Heart left ventricle (tissue), 16 donors: ENCODE measurements at regions of chr3 and their contacts with region 1.

Region 1: DNA sequence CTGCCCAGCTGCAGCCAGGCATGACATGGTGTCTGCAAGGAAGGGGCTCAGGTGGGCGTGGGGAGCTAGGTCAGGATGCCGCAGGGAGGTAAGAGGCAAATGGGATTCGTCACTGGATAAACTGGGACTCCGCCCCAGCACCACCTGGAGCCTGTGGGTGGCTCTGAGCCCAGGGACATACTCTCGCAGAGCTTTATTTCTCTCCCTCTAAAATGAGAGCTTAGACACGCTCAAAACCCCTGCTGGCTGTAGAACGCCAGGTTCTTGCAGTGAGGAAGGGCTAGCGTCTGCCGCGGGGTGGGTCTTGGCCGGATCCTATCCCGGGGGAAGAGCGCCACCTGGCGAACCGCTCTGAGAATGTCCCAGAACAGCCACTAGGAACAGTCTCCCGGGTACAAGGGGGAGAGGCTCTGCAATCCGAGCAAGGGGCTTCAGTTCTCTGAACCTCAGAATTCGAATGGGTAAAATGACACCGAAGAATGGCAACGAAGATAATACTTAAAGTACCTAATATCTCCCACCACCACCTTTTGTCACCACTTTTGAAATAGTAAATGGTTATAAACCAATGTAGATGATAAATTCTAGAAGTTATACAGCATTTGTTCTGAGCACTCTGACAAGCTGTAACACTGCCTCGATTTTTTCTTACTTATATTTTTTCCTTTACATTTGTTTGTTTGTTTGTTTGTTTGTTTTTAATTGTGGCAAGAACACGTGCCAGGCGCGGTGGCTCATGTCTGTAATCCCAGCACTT is 53.2 kb upstream of the SRGAP3 start:
- DNase-seq: peak; percentile 73 to 89 (median 80)
- ATAC-seq: peak; percentile 87 to 96 (median 94)
- H3K4me3 ChIP-seq: peak overlapping the region in 8 of 12 donors; percentile 18 to 50 (median 32)
- H3K27ac ChIP-seq: no peak overlapping the region
- H3K4me1 ChIP-seq: peaks cover 0 to 11% (median 3%) of the 10 kb centered on the region in 12 donors
- H3K27me3 ChIP-seq: peaks cover 0 to 5% (median 0%) of the 10 kb centered on the region in 9 donors
- CTCF ChIP-seq: peak; percentile 77 to 96 (median 88)
- POLR2A ChIP-seq: no peak

Region 2: GRCh38 chr3:8945890-8946600 is 356.6 kb before region 1 on chr3:
- intact Hi-C with region 1: no loop called
- DNase-seq: no peak
- ATAC-seq: no peak
- H3K4me3 ChIP-seq: no peak overlapping the region
- H3K27ac ChIP-seq: no peak overlapping the region
- H3K4me1 ChIP-seq: no peaks in the 10 kb centered on the region
- H3K27me3 ChIP-seq: no peaks in the 10 kb centered on the region
- CTCF ChIP-seq: no peak
- POLR2A ChIP-seq: no peak

Region 3: GRCh38 chr3:8970971-8971589 is 331.5 kb before region 1 on chr3:
- intact Hi-C with region 1: loop called (anchors 1 to 2 kb)
- DNase-seq: peak in 3 of 5 donors; percentile 43 to 56 (median 54)
- ATAC-seq: peak; percentile 5 to 70 (median 64)
- H3K4me3 ChIP-seq: no peak overlapping the region
- H3K27ac ChIP-seq: no peak overlapping the region
- H3K4me1 ChIP-seq: peaks cover 0 to 3% (median 0%) of the 10 kb centered on the region in 12 donors
- H3K27me3 ChIP-seq: peaks cover 0 to 6% (median 0%) of the 10 kb centered on the region in 9 donors
- CTCF ChIP-seq: peak; percentile 94 to 100 (median 99)
- POLR2A ChIP-seq: no peak

Region 4: DNA sequence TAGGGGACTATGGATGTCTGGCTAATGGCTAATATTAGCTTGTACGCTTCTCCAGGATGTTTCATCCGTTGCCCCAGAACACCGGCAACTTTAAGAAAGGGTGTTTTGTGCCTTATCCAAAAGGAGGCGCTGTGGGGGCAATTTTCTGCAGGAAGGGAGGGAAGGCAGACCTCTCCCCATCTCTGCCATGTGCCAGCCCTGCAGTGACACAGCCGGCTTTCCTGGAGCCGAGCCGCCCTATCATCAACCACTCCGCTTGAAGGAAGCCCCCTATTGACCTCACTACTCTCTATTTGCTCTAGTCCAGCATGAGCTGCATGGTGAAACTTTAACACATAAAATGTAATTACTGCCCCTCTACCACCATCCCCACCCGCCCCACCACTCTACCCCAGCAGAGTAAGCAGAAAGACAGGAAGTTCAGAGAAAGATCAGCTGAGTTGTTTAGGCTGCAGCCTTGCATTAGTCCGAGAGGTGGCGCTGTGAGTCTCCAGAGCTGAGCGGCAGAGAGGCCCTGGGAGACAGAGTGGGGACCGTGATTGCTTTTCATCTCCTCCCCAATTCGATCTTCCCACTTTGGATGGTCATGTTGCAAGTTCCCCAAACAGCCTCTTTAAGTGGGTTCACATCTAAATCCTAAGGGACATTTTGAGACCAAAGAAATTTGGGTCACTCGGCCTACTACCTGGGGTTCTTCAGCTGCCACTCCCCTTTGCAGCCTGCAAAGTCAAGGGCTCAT is 314.8 kb before region 1 on chr3:
- intact Hi-C with region 1: loop called (anchors 1 to 5 kb)
- DNase-seq: peak in 4 of 5 donors; percentile 52 to 68 (median 57)
- ATAC-seq: peak; percentile 56 to 81 (median 66)
- H3K4me3 ChIP-seq: no peak overlapping the region
- H3K27ac ChIP-seq: no peak overlapping the region
- H3K4me1 ChIP-seq: peaks cover 0 to 18% (median 3%) of the 10 kb centered on the region in 12 donors
- H3K27me3 ChIP-seq: no peaks in the 10 kb centered on the region
- CTCF ChIP-seq: peak; percentile 63 to 85 (median 74)
- POLR2A ChIP-seq: no peak

Region 5: DNA sequence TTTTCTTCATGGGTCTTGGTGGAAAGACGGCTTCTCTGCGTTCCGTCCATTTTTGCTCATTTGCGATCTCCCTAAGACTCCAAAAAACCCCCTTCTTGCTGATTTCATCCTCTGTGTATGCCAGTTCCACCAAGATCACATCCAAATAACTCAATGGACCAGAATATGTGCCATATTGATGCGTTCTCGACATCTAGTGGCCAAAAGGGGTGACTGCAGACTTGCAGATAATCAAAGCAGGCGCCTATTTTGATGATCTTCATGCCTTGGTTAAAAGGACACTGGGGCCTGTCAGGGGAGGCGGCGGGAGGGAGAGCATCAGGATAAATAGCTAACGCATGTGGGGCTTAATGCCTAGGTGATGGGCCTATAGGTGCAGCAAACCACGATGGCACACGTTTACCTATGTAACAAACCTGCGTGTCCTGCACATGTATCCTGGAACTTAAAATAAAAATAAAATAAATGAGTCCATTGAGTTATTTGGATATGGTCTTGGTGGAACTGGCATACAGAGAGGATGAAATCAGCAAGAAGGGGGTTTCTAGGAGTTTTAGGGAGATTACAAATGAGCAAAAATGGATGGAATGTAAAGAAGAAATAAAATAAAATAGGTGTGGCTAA is 235.1 kb before region 1 on chr3:
- intact Hi-C with region 1: loop called in 9 of 10 experiments (anchors 2 to 10 kb)
- DNase-seq: peak in 3 of 5 donors; percentile 29 to 43 (median 43)
- ATAC-seq: peak; percentile 64 to 86 (median 73)
- H3K4me3 ChIP-seq: no peak overlapping the region
- H3K27ac ChIP-seq: peak overlapping the region in 4 of 12 donors; percentile 26 to 29 (median 27)
- H3K4me1 ChIP-seq: peaks cover 0 to 37% (median 14%) of the 10 kb centered on the region in 12 donors
- H3K27me3 ChIP-seq: no peaks in the 10 kb centered on the region
- CTCF ChIP-seq: peak; percentile 79 to 96 (median 94)
- POLR2A ChIP-seq: no peak

Region 6: GRCh38 chr3:9078561-9079240 is 223.9 kb before region 1 on chr3:
- intact Hi-C with region 1: loop called in 1 of 10 experiments (anchors 2 kb)
- DNase-seq: no peak
- ATAC-seq: no peak
- H3K4me3 ChIP-seq: no peak overlapping the region
- H3K27ac ChIP-seq: no peak overlapping the region
- H3K4me1 ChIP-seq: peaks cover 0 to 7% (median 0%) of the 10 kb centered on the region in 12 donors
- H3K27me3 ChIP-seq: no peaks in the 10 kb centered on the region
- CTCF ChIP-seq: peak in 1 of 12 donors; percentile 5
- POLR2A ChIP-seq: no peak